Caco-2 (cell line): ENCODE measurements at regions of chr1 and their contacts with region 1.

Region 1: DNA sequence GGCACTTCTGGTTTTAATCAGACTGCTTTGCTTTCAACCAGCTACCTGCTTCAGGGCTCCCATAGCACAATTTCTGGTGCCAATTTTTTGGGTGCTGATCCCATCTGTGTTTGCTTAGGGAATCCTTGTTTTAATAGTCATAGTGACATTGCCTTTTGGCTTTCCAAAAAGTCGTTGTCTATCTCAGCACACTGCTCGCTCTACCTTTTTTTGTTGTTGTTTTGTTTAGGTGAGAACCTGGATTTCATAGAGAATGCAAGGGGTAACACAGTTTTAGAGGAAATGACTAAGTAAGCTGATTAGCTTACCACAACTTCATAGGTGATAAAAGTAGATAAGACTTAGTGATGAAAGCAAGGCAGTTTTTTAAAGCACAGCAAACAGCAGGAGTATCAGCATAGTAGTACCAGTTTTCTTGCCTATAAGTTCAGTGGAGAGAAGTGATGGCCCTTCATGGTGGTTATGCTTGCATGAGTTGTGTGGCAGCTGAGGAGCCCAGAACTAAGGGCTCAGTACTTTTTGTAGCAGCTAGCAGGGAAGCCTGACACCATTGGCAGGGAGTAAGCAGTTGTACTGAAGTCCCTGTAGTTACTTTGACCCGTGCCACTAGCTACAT is 31.3 kb downstream of the NEK7 start:
- DNase-seq: no peak
- H3K4me3 ChIP-seq: no peak overlapping the region
- H3K4me3 Mint-ChIP-seq: no peak overlapping the region
- H3K27ac Mint-ChIP-seq: no peak overlapping the region
- H3K4me1 ChIP-seq: peaks cover 25% of the 10 kb centered on the region
- H3K4me1 Mint-ChIP-seq: no peaks in the 10 kb centered on the region
- H3K27me3 ChIP-seq: no peaks in the 10 kb centered on the region
- H3K27me3 Mint-ChIP-seq: no peaks in the 10 kb centered on the region
- CTCF ChIP-seq: no peak

Region 2: DNA sequence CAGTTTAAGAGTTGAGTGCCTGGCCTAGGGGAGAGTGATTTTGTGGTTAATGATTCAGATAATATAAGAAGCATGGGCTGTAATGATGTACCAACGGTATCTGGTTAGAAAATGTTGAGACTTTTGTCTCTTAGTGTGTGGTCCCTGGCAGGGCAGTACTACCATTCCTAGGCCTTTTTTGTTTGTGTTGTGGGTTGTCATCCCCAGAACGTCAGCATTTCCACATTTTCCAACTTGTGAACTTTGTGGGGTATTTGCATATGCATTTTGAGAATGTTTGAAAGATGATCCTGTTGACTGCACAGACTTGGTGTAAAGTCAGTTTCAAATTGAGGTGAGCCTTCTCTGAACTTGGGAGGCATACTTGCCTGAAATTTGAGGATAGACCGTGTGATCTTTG is 19.9 kb before region 1 on chr1:
- CTCF ChIA-PET with region 1: no interaction called
- POLR2A ChIA-PET with region 1: no interaction called
- intact Hi-C with region 1: loop called (anchors 2 kb)
- DNase-seq: no peak
- H3K4me3 ChIP-seq: no peak overlapping the region
- H3K4me3 Mint-ChIP-seq: no peak overlapping the region
- H3K27ac Mint-ChIP-seq: no peak overlapping the region
- H3K4me1 ChIP-seq: peaks cover 49% of the 10 kb centered on the region
- H3K4me1 Mint-ChIP-seq: peaks cover 39% of the 10 kb centered on the region
- H3K27me3 ChIP-seq: no peaks in the 10 kb centered on the region
- H3K27me3 Mint-ChIP-seq: no peaks in the 10 kb centered on the region
- CTCF ChIP-seq: no peak

Region 3: DNA sequence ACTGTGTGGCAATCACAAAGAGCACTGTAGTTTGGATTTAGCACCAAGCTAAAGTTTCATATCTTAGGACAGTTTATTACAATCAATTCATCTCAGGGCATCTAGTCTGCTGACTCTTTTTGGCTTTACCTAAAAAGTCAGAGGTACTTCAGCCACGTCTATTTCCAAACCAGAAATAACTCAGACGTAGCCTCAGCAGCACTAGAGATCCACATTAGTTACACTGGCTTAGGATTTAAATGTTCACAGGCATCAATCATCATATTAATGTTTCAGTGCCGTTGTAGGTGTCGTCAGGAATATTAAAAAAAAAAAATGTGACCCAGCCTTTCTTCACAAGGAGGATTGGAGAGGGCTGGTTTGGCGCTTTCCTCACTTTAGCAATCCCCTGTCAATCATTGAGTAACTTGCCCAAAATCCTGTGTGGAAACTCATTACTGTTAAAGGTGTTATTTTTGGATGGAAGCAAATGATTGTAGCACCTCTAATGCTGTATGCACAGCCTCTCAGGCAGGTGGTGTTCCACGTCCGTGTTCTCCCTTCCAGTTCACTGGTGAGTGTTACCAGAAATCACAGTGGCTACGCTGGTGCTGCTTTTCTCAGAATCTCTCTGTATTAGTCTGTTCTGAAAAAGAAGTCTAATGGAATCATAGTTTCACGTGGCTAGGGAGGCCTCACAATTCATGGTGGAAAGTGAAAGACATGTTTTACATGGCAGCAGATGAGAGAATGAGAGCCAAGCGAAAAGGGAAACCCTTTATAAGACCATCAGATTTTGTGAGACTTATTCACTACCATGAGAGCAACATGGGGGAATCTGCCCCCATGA is 14.1 kb after region 1 on chr1:
- CTCF ChIA-PET with region 1: no interaction called
- POLR2A ChIA-PET with region 1: no interaction called
- intact Hi-C with region 1: no loop called
- DNase-seq: no peak
- H3K4me3 ChIP-seq: no peak overlapping the region
- H3K4me3 Mint-ChIP-seq: no peak overlapping the region
- H3K27ac Mint-ChIP-seq: peak overlapping the region; percentile 25
- H3K4me1 ChIP-seq: no peaks in the 10 kb centered on the region
- H3K4me1 Mint-ChIP-seq: no peaks in the 10 kb centered on the region
- H3K27me3 ChIP-seq: no peaks in the 10 kb centered on the region
- H3K27me3 Mint-ChIP-seq: no peaks in the 10 kb centered on the region
- CTCF ChIP-seq: no peak